ENCODE measurements at regions of chr15 and their contacts with region 1.

Region 1: GRCh38 chr15:68875377-68876116 is 54.8 kb upstream of the SPESP1 start:
- DNase-seq: peak; percentile 82 to 89 (median 84)
- H3K4me3 ChIP-seq: no peak overlapping the region
- H3K4me3 Mint-ChIP-seq: peak overlapping the region in 3 of 8 donors; percentile 36 to 71 (median 66)
- H3K27ac ChIP-seq: no peak overlapping the region
- H3K27ac Mint-ChIP-seq: peak overlapping the region in 1 of 7 donors; percentile 11
- H3K4me1 ChIP-seq: peaks cover 3% of the 10 kb centered on the region
- H3K4me1 Mint-ChIP-seq: peaks cover 0 to 6% (median 4%) of the 10 kb centered on the region in 4 donors
- H3K27me3 ChIP-seq: peaks cover 9% of the 10 kb centered on the region
- H3K27me3 Mint-ChIP-seq: peaks cover 12 to 26% of the 10 kb centered on the region in 2 donors

Region 2: GRCh38 chr15:68550481-68551295 is 324.9 kb before region 1 on chr15:
- CTCF ChIA-PET with region 1: interaction called, 45 read pairs
- POLR2A ChIA-PET with region 1: no interaction called
- intact Hi-C with region 1: loop called (anchors 1 kb)
- DNase-seq: peak; percentile 49 to 58 (median 55)
- H3K4me3 ChIP-seq: no peak overlapping the region
- H3K4me3 Mint-ChIP-seq: peak overlapping the region in 1 of 8 donors; percentile 14
- H3K27ac ChIP-seq: no peak overlapping the region
- H3K27ac Mint-ChIP-seq: no peak overlapping the region
- H3K4me1 ChIP-seq: no peaks in the 10 kb centered on the region
- H3K4me1 Mint-ChIP-seq: peaks cover 0 to 3% (median 0%) of the 10 kb centered on the region in 4 donors
- H3K27me3 ChIP-seq: peaks cover 4% of the 10 kb centered on the region
- H3K27me3 Mint-ChIP-seq: peaks cover 34 to 45% of the 10 kb centered on the region in 2 donors

Region 3: DNA sequence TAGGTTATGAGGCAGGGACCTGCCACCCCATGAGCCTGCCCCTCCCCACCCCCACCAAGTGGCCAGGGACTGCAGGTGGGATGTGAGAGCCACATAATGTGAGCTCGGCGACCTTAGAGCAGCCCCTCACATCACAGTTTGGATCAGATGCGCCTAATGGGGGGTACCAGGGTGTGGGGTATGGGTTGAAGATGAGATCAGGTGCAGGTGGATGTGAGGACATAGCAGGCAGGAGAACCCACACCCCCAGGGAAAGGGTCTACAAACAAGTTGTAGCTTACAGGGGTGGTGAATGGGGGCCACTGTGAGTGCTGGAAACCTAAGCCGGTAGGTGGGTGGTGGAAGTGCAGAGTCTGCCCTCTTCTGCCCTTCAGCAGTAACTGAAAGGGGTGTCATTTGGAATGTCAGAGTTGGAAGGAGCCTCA is 202.8 kb before region 1 on chr15:
- CTCF ChIA-PET with region 1: interaction called, 22 read pairs
- POLR2A ChIA-PET with region 1: no interaction called
- intact Hi-C with region 1: loop called (anchors 2 kb)
- DNase-seq: no peak
- H3K4me3 ChIP-seq: no peak overlapping the region
- H3K4me3 Mint-ChIP-seq: no peak overlapping the region
- H3K27ac ChIP-seq: no peak overlapping the region
- H3K27ac Mint-ChIP-seq: no peak overlapping the region
- H3K4me1 ChIP-seq: no peaks in the 10 kb centered on the region
- H3K4me1 Mint-ChIP-seq: peaks cover 0 to 5% (median 3%) of the 10 kb centered on the region in 4 donors
- H3K27me3 ChIP-seq: no peaks in the 10 kb centered on the region
- H3K27me3 Mint-ChIP-seq: peaks cover 9 to 19% of the 10 kb centered on the region in 2 donors

Region 4: DNA sequence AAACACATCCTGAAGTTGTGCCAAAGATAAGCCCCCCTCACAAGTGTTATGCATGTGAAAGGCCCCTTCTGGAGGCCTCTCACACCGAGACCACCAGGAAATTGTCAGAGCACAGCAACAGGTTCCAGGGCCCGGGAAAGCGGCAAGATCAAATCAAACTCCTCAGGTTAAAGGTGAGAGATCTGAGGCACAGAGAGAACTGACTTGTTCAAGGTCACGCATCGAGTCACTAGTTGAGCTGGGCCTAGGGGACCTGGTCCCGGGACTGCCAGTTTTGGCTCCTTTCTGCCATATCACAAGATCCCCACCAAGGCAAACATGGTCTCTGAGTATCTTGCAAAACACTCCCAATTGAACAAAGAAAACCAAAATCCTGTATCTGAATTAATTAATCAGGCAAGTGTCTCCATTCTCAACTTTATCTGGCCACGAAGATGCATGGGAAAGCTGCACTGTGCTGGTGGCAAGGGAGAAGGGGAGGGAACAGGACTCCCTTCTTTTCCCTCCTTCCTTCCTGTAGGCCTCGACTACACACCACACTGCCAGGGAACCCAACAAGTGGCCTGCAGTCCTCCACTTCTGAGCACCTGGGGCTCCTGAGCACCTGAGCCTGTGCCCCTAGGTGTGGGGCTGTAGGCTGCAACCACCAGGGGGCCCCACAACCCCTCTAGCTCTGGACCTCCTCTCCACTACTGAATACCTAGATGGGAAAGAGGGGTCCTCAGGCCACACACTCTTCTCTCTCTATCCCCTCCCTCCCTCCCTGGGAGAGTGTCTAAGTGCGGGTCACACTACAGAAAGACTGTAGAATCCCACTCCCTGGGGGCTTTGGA is 92.1 kb before region 1 on chr15:
- CTCF ChIA-PET with region 1: interaction called, 89 read pairs
- POLR2A ChIA-PET with region 1: interaction called, 4 read pairs
- intact Hi-C with region 1: loop called (anchors 1 kb)
- DNase-seq: peak; percentile 58 to 67 (median 60)
- H3K4me3 ChIP-seq: no peak overlapping the region
- H3K4me3 Mint-ChIP-seq: peak overlapping the region in 1 of 8 donors; percentile 8
- H3K27ac ChIP-seq: no peak overlapping the region
- H3K27ac Mint-ChIP-seq: peak overlapping the region in 6 of 7 donors; percentile 12 to 89 (median 74)
- H3K4me1 ChIP-seq: peaks cover 16% of the 10 kb centered on the region
- H3K4me1 Mint-ChIP-seq: peaks cover 18 to 24% (median 21%) of the 10 kb centered on the region in 4 donors
- H3K27me3 ChIP-seq: no peaks in the 10 kb centered on the region
- H3K27me3 Mint-ChIP-seq: no peaks in the 10 kb centered on the region

Region 5: DNA sequence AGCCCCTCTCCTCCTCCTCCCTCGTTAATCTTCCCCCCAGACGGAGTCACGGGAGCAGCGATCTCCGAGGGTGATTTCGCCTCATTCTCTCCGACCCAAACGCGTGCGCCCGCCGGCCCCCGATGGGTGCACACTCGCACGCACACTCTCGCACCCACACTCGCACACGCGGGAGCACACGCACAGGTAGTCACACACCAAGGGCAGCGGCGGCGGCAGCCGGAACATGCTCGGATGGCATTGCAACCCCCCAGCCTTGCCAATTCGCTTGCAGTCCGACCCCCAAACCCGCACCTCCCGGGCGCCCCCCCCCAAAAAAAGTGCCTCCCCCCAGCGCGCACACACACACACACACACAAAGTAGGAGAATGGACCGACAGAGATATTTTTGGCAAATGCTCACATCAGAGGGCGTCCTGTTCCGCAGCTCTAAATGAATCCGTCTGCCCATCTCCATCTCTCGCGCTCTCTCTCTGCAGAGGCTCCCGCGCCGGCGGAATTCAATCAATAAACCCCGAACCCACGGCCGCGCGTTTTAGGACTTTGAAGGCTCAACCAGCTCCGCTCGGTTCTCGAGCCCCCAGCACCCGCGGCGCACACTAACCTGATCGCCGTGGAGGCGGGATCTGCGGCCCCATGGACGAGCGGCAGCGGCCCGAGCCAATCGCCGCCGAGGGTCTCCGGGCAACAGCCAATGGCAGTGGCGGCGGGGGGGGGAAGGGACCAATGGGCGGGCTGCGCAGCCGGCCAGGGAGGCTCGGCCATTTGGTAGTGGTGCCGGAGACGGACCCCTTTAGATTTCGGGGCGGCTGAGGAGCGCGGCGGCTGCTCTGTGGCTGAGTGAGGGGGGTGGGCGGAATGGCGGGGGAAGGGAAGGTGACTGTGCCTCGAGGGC is 55.0 kb before region 1 on chr15 and contains the start of gene ANP32A:
- CTCF ChIA-PET with region 1: interaction called, 6 read pairs
- POLR2A ChIA-PET with region 1: interaction called, 5 read pairs
- intact Hi-C with region 1: loop called (anchors 5 kb)
- DNase-seq: peak; percentile 94 to 98 (median 95)
- H3K4me3 ChIP-seq: peak within 1 kb of the TSS; percentile 77 to 88
- H3K4me3 Mint-ChIP-seq: peak within 1 kb of the TSS; percentile 93 to 100 (median 98)
- H3K27ac ChIP-seq: peak within 1 kb of the TSS; percentile 91
- H3K27ac Mint-ChIP-seq: peak within 1 kb of the TSS; percentile 93 to 99 (median 98)
- H3K4me1 ChIP-seq: peaks cover 28% of the 10 kb centered on the region
- H3K4me1 Mint-ChIP-seq: peaks cover 20 to 38% (median 23%) of the 10 kb centered on the region in 4 donors
- H3K27me3 ChIP-seq: no peaks in the 10 kb centered on the region
- H3K27me3 Mint-ChIP-seq: no peaks in the 10 kb centered on the region
- total RNA-seq, gene ANP32A: 134 TPM